H1 (cell line): ENCODE measurements at regions of chr20 and their contacts with region 1.

Region 1: DNA sequence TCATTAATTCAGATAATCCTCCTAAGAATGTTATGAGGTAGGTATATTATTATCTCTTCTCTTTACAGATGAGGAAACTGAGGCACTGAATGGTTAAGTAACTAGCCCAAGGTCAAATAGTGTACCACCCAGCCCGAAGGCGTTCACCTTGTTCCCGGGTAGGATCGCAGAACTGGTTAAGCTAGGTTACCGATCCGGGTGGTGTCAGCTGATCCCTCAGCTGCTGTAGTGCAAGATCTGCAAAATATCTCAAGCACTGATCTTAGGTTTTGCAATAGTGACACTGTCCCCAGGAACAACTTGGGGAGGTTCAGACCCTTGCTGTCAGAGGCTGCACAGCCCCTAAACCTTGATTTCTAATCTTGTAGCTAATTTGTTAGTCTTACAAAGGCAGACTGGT is 28.2 kb downstream of the SLC52A3 start:
- DNase-seq: no peak
- H3K4me3 ChIP-seq: no peak overlapping the region
- H3K27ac ChIP-seq: no peak overlapping the region
- H3K4me1 ChIP-seq: peaks cover 0 to 1% (median 0%) of the 10 kb centered on the region in 4 experiments; a peak in 1 of 7 replicates
- H3K27me3 ChIP-seq: 0 out of 7 replicates have a peak, but pooled peaks cover 0 to 2% (median 0%) of the 10 kb centered on the region in 4 experiments
- CTCF ChIP-seq: no peak
- EP300 ChIP-seq: no peak
- POLR2A ChIP-seq: no peak
- RAD21 ChIP-seq: no peak

Region 2: DNA sequence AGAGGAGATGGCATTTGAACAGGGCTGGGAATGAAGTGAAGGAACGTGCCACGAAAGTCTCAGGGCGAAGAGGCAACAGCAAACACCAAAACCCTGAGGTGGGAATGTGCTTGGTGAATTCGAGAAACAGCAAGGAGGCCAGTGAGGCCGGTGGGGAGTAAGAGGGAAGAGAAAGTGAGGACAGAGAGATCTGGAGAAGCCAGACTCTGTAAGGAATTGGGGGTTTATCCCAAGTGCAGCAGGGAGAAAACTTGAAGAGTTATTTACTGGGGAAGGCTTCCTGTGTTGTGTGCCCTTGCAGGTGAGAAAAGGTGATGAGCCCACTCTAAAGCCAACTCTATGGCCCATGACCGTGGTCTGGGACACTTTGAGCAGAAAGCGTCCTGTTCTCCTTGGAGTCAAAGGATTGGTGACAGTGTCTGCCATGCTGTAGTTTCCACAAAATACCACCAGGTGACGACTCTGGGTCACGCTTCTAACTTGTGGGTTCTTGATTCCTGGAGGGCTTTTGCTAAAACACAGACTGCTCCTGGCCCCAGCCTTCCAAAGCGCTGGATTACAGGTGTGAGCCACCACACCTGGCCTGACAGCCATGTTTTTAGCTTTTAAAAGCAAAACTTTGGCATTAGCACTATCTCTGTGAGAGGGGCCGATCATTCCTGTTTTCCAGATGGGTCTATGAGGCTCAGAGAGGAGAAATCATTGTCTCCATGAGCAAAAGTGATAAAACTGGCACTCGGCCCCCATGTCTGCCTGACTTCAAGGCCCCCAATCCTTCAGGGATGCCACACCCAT is 178.5 kb before region 1 on chr20:
- CTCF ChIA-PET with region 1: interaction called, 35 read pairs
- POLR2A ChIA-PET with region 1: no interaction called
- DNase-seq: peak in 1 of 2 experiments; percentile 83
- H3K4me3 ChIP-seq: no peak overlapping the region
- H3K27ac ChIP-seq: no peak overlapping the region
- H3K4me1 ChIP-seq: no peaks in the 10 kb centered on the region
- H3K27me3 ChIP-seq: no peaks in the 10 kb centered on the region
- CTCF ChIP-seq: peak; percentile 74 to 99 (median 95)
- EP300 ChIP-seq: no peak
- POLR2A ChIP-seq: no peak
- RAD21 ChIP-seq: peak; percentile 98

Region 3: GRCh38 chr20:675453-676314 is 64.5 kb before region 1 on chr20 and contains the start of gene SCRT2:
- CTCF ChIA-PET with region 1: interaction called, 16 read pairs
- POLR2A ChIA-PET with region 1: interaction called, 3 read pairs
- DNase-seq: peak in 1 of 2 experiments; percentile 91
- H3K4me3 ChIP-seq: peak within 1 kb of the TSS; percentile 48 to 92 (median 58)
- H3K27ac ChIP-seq: no peak within 1 kb of the TSS
- H3K4me1 ChIP-seq: peaks cover 0 to 13% (median 7%) of the 10 kb centered on the region in 4 experiments; a peak in 5 of 7 replicates
- H3K27me3 ChIP-seq: peaks cover 3 to 38% (median 32%) of the 10 kb centered on the region in 4 experiments
- CTCF ChIP-seq: no peak; a peak in 1 of 4 replicates
- EP300 ChIP-seq: no peak
- POLR2A ChIP-seq: no peak
- RAD21 ChIP-seq: no peak
- total RNA-seq, gene SCRT2: 0.27 and 0.34 TPM in 2 replicates

Region 4: DNA sequence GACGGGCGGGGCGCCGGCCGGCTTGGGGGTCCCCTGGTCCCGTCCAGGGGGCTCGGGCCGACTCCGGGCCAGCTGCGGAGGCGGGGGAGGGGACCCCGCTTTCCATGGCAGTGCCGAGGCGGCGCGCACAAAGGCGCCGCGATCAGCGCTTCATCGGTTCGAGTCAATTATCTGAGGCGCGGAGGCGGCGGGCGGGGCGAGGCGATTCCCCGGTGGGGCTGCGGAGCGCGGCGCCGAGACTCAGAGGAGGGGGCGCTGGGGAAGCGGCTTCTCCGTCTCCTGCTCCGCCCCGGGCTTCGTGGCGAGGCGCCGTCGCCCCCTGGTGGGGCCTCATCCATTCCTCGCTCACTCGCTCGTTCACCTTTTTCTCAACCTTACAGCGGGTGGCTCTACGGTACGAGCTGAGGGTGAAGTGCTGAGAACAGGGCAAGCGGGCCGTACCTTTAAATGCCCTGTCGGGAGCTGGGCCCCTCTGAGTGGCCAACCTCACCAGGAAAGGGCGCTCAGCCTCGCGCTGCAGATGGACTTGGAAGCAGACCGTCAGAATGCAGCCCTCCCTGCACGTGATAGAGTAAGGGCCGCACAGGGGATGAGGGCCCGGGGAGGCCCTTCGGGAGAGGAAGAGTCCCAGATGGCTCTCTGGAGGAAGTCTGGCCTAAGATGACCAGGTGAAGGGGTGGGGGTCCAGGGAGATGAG is 11.7 kb before region 1 on chr20:
- CTCF ChIA-PET with region 1: interaction called, 17 read pairs
- POLR2A ChIA-PET with region 1: interaction called, 3 read pairs
- DNase-seq: peak; percentile 62 to 91
- H3K4me3 ChIP-seq: peak overlapping the region; percentile 34 to 68 (median 42)
- H3K27ac ChIP-seq: no peak overlapping the region
- H3K4me1 ChIP-seq: peaks cover 0 to 4% (median 2%) of the 10 kb centered on the region in 4 experiments; a peak in 4 of 7 replicates
- H3K27me3 ChIP-seq: peaks cover 0 to 12% (median 9%) of the 10 kb centered on the region in 4 experiments; a peak in 6 of 7 replicates
- CTCF ChIP-seq: peak; percentile 71 to 88 (median 78)
- EP300 ChIP-seq: no peak
- POLR2A ChIP-seq: no peak
- RAD21 ChIP-seq: peak; percentile 78 to 87

Region 5: GRCh38 chr20:760751-761417 is 20.7 kb after region 1 on chr20:
- CTCF ChIA-PET with region 1: interaction called, 11 read pairs
- POLR2A ChIA-PET with region 1: interaction called, 5 read pairs
- DNase-seq: peak; percentile 59 to 94
- H3K4me3 ChIP-seq: peak overlapping the region in 2 of 4 experiments; percentile 26 to 42; a peak in 5 of 8 replicates
- H3K27ac ChIP-seq: no peak overlapping the region
- H3K4me1 ChIP-seq: peaks cover 0 to 3% (median under 1%) of the 10 kb centered on the region in 4 experiments; a peak in 2 of 7 replicates
- H3K27me3 ChIP-seq: peaks cover 2 to 9% (median 8%) of the 10 kb centered on the region in 4 experiments; a peak in 6 of 7 replicates
- CTCF ChIP-seq: peak; percentile 77 to 100 (median 98)
- EP300 ChIP-seq: no peak
- POLR2A ChIP-seq: no peak
- RAD21 ChIP-seq: peak; percentile 32 to 51; a peak in 3 of 4 replicates